Activated CD8-positive, alpha-beta memory T cell treated with anti-CD3 and anti-CD28 coated beads, Interleukin-2, amount 10 ng/mL, durations not matched to agents 7 days and 5 days (primary cell): ENCODE measurements at regions of chr4 and their contacts with region 1.

Region 1: DNA sequence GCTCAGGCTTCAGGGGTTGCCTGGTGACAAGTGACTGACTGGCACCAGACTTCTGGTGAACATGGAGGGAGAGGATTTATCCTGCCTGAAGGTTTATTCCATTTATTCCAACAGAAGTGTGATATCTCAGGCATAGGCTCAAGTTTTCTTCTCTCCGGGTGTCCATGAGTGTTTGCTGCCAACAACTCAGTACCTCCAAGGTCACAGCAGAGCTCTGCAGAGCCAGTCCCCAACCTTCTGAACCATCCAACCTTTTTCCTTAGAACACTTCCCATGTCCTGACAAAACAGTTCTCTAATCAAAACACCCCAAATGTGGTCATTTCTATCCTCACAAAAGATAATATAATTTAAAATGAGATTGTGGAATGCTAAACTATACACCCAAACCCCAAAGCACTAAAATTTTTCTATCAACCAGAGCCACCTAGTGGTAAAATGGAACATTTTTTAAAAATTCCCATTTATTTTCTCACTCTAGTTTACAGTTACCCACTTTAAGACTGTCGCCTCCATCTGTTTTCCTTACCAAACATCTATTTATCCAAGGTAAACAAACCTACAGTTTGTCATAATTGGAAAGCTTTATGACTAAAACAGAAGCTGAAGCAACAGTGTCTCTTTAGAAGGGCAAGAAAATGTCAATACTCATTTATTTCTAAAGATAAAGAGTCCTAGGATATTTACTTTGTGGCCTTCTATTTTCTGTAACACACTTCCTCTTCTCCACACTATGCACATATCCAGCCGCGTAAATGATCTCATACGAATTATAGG is 39.6 kb downstream of the TMEM154 start:
- DNase-seq: no peak
- ATAC-seq: peak; percentile 34
- H3K4me3 Mint-ChIP-seq: no peak overlapping the region
- H3K27ac Mint-ChIP-seq: no peak overlapping the region
- H3K4me1 Mint-ChIP-seq: peaks cover 29% of the 10 kb centered on the region
- H3K27me3 Mint-ChIP-seq: no peaks in the 10 kb centered on the region

Region 2: DNA sequence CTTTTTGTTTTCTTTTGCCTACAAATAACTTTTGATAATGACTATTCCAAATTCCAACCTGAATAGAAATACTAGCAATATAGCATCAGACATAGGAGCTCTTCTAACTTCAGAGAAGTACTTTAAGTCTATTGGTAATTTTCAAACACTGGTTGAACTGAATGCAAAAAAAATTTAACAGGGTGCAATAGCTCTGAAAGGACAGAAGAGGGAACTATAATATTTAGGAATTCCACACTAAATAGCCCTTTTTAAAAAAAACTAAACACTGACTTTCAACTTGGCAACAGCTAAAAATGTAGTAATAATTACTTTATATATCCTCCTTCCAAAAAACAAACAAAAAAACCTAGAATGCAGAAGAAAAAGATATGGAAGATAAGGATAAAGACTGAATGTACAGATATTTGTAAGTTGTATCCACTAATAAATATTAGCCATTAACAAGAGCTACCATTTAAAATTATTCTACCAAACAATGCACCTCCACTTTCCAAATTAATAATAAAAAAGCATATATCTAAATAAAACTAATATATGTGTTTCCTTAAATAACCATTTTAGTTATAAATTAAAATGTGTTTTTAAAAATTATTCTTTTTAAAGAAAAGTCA is 185.7 kb before region 1 on chr4:
- CTCF ChIA-PET with region 1: interaction called, 11 read pairs
- DNase-seq: no peak
- ATAC-seq: no peak
- H3K4me3 Mint-ChIP-seq: no peak overlapping the region
- H3K27ac Mint-ChIP-seq: no peak overlapping the region
- H3K4me1 Mint-ChIP-seq: peaks cover 37% of the 10 kb centered on the region
- H3K27me3 Mint-ChIP-seq: no peaks in the 10 kb centered on the region